ENCODE measurements at regions of chr6 and their contacts with region 1.

Region 1: DNA sequence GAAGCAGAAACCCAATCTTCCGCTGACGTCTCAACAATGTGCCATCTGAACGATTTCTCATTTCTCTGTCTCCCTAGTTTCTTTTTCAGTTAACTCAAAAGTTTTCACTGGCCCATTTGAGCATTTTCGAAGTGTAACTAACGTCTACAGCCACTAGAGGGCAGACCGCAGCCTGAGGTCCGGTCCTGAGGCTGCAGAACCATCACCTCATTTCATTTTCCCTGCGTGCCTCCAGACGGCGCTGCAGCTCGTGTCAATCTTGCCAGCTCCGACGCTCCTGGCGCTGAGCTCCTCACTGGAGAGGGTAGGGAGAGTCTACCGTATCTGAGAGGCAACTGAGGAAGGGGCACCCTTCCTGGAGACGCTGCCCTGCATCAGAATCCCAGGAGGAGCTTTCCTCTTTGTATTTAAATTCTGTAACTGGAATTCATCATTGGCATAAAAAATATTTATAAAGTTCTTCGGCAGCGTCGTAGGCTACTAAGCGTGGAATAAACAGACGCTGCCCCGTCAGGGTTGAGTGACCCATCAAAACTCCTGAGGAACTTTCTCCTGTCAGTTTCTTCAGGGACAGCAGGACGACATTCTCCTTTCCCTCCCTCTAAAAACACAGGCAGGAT is 28.5 kb upstream of the DTNBP1 start:
- DNase-seq: peak; percentile 55 to 92 (median 76)
- ATAC-seq: peak; percentile 100
- H3K4me3 ChIP-seq: no peak overlapping the region
- H3K4me3 Mint-ChIP-seq: no peak overlapping the region
- H3K27ac ChIP-seq: no peak overlapping the region
- H3K27ac Mint-ChIP-seq: no peak overlapping the region
- H3K4me1 ChIP-seq: no peaks in the 10 kb centered on the region
- H3K4me1 Mint-ChIP-seq: peaks cover 4% of the 10 kb centered on the region
- H3K27me3 ChIP-seq: no peaks in the 10 kb centered on the region
- H3K27me3 Mint-ChIP-seq: peaks cover 8% of the 10 kb centered on the region
- CTCF ChIP-seq: peak; percentile 100

Region 2: GRCh38 chr6:14770572-14770971 is 920.8 kb before region 1 on chr6:
- CTCF ChIA-PET with region 1: no interaction called
- POLR2A ChIA-PET with region 1: no interaction called
- intact Hi-C with region 1: no loop called
- DNase-seq: no peak
- ATAC-seq: no peak
- H3K4me3 ChIP-seq: no peak overlapping the region
- H3K4me3 Mint-ChIP-seq: no peak overlapping the region
- H3K27ac ChIP-seq: no peak overlapping the region
- H3K27ac Mint-ChIP-seq: no peak overlapping the region
- H3K4me1 ChIP-seq: no peaks in the 10 kb centered on the region
- H3K4me1 Mint-ChIP-seq: no peaks in the 10 kb centered on the region
- H3K27me3 ChIP-seq: no peaks in the 10 kb centered on the region
- H3K27me3 Mint-ChIP-seq: no peaks in the 10 kb centered on the region
- CTCF ChIP-seq: no peak

Region 3: DNA sequence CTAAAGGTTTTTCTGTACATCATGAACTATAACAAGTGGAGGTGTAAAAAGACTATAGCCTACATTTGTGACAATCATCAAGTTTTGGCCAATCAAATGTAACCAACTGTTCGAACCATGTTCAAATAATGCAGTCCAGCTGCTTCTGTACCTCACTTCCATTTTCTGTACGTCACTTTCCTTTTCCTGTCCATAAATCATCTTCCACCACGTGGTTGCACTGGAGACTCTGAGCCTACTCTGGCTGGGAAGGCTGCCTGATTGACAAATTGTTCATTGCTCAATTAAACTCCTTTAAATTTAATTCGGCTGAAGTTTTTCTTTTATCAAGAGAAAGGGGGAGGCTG is 715.9 kb before region 1 on chr6:
- CTCF ChIA-PET with region 1: no interaction called
- POLR2A ChIA-PET with region 1: no interaction called
- intact Hi-C with region 1: no loop called
- DNase-seq: peak in 1 of 9 experiments; percentile 7
- ATAC-seq: no peak
- H3K4me3 ChIP-seq: no peak overlapping the region
- H3K4me3 Mint-ChIP-seq: no peak overlapping the region
- H3K27ac ChIP-seq: no peak overlapping the region
- H3K27ac Mint-ChIP-seq: no peak overlapping the region
- H3K4me1 ChIP-seq: no peaks in the 10 kb centered on the region
- H3K4me1 Mint-ChIP-seq: no peaks in the 10 kb centered on the region
- H3K27me3 ChIP-seq: no peaks in the 10 kb centered on the region
- H3K27me3 Mint-ChIP-seq: peaks cover 3% of the 10 kb centered on the region
- CTCF ChIP-seq: no peak

Region 4: DNA sequence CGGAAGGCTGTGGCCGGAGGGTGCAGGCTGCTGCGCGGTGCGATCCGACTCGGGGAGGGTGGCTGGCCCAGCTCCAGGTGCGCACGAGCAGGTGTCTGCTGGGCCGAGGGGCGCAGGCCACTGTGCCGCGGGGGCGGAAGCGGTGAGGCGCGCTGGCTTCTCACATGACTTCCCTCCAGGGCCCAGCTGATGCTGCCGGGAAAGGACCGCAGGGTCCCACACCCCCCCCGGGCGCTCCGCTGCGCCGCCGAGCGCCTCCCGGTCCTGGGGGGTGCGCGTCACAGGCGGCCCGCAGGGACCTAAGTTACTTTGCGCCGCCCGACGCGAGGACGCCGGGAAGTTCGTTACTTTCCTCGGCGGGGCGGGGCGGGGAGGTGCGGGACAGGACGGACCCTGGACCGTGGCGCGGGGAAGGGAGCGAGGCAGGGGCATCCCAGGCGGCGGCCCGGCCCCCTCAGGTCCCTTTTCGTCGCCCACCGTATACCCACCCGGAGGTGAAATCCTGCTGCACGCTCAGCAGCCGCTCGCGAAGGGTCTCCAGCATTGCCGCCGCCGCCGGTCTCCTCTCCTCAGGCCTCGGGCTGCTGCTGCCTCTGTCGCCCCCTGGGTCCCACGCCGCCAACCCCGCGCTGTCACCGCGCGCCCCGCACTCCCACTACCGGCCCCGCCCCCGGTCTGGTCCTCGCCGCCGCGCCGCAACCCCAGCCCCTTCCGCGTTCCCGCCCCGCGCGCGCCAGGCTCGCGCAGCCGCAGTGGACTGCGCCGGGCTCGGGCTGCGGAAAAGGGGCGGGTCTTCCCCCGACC is 28.8 kb before region 1 on chr6 and contains the start of gene DTNBP1:
- CTCF ChIA-PET with region 1: interaction called, 4 read pairs
- POLR2A ChIA-PET with region 1: no interaction called
- intact Hi-C with region 1: loop called in 1 of 2 experiments (anchors 2 kb)
- DNase-seq: peak; percentile 58 to 90 (median 82)
- ATAC-seq: peak; percentile 73
- H3K4me3 ChIP-seq: peak within 1 kb of the TSS; percentile 67 to 76
- H3K4me3 Mint-ChIP-seq: peak within 1 kb of the TSS; percentile 83
- H3K27ac ChIP-seq: peak within 1 kb of the TSS; percentile 55 to 73
- H3K27ac Mint-ChIP-seq: peak within 1 kb of the TSS; percentile 73
- H3K4me1 ChIP-seq: peaks cover 7% of the 10 kb centered on the region
- H3K4me1 Mint-ChIP-seq: peaks cover 41% of the 10 kb centered on the region
- H3K27me3 ChIP-seq: no peaks in the 10 kb centered on the region
- H3K27me3 Mint-ChIP-seq: peaks cover 2% of the 10 kb centered on the region
- CTCF ChIP-seq: no peak
- total RNA-seq, gene DTNBP1: 12.3 to 12.6 TPM

Region 5: DNA sequence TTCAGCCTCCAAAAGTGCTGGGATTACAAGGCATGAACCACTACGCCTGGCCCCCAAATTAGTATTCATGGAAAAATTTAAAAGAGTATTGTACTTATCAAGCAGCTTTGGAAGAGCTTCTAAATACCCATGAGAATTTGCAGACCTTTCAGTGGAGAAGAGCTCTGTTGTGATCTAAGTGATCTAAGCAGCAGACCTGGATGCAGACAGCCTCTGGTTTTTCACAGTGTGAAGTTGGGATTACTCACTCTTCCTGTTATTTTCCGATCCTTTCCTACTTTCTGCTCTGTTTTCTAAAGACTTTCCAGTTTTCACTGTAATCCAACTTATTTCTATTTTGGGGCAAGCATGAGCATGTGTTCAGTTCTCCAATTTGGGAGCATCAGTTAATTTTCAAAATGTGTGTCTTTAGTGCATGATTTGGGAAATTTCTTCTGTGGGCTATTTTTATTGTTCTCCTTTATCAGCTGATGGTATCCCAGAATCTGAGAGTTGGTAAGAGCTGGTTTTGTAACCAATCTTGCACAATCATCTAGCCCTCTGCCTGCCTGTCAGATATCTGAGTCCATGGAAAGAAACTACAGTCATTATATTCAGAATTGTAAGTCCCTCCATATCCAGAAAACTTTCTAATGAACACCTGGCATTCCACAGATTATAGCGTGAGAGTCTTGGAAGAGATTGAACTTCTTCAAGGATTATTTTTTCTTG is 179.1 kb after region 1 on chr6:
- CTCF ChIA-PET with region 1: no interaction called
- POLR2A ChIA-PET with region 1: no interaction called
- intact Hi-C with region 1: no loop called
- DNase-seq: no peak
- ATAC-seq: no peak
- H3K4me3 ChIP-seq: no peak overlapping the region
- H3K4me3 Mint-ChIP-seq: no peak overlapping the region
- H3K27ac ChIP-seq: no peak overlapping the region
- H3K27ac Mint-ChIP-seq: no peak overlapping the region
- H3K4me1 ChIP-seq: no peaks in the 10 kb centered on the region
- H3K4me1 Mint-ChIP-seq: no peaks in the 10 kb centered on the region
- H3K27me3 ChIP-seq: no peaks in the 10 kb centered on the region
- H3K27me3 Mint-ChIP-seq: peaks cover 12% of the 10 kb centered on the region
- CTCF ChIP-seq: no peak

Region 6: DNA sequence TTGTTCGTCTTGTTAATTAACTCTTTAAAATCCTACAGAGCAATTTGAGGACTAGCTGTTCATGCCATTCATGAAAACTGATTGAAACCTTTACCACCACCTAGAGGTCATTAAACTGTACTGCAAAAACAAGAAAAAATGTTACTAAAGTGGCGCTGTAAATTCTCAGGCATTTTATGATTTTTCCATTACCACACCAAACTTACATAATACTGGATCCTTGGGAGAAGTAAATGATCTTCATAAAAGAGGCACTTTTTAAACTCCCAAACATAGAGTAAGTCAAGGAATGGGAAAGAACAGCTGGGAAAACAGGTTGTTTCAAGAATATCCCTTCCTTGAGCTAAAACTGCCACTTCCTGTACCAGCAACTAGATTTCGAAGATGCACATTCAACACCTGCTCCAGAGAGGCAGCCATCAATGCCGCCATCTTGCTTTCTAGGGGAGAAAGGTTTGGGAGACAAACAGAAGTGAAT is 491.9 kb after region 1 on chr6:
- CTCF ChIA-PET with region 1: interaction called, 80 read pairs
- POLR2A ChIA-PET with region 1: no interaction called
- intact Hi-C with region 1: loop called (anchors 1 kb)
- DNase-seq: peak in 2 of 9 experiments; percentile 44 to 62
- ATAC-seq: peak; percentile 36
- H3K4me3 ChIP-seq: no peak overlapping the region
- H3K4me3 Mint-ChIP-seq: no peak overlapping the region
- H3K27ac ChIP-seq: no peak overlapping the region
- H3K27ac Mint-ChIP-seq: no peak overlapping the region
- H3K4me1 ChIP-seq: peaks cover 17% of the 10 kb centered on the region
- H3K4me1 Mint-ChIP-seq: peaks cover 35% of the 10 kb centered on the region
- H3K27me3 ChIP-seq: no peaks in the 10 kb centered on the region
- H3K27me3 Mint-ChIP-seq: no peaks in the 10 kb centered on the region
- CTCF ChIP-seq: peak; percentile 89

Region 7: GRCh38 chr6:16216501-16217155 is 525.3 kb after region 1 on chr6:
- CTCF ChIA-PET with region 1: interaction called, 154 read pairs
- POLR2A ChIA-PET with region 1: no interaction called
- intact Hi-C with region 1: no loop called
- DNase-seq: peak in 1 of 9 experiments; percentile 17
- ATAC-seq: no peak
- H3K4me3 ChIP-seq: no peak overlapping the region
- H3K4me3 Mint-ChIP-seq: no peak overlapping the region
- H3K27ac ChIP-seq: no peak overlapping the region
- H3K27ac Mint-ChIP-seq: no peak overlapping the region
- H3K4me1 ChIP-seq: no peaks in the 10 kb centered on the region
- H3K4me1 Mint-ChIP-seq: no peaks in the 10 kb centered on the region
- H3K27me3 ChIP-seq: peaks cover 0 to 6% of the 10 kb centered on the region in 2 experiments
- H3K27me3 Mint-ChIP-seq: peaks cover 40% of the 10 kb centered on the region
- CTCF ChIP-seq: no peak

Region 8: DNA sequence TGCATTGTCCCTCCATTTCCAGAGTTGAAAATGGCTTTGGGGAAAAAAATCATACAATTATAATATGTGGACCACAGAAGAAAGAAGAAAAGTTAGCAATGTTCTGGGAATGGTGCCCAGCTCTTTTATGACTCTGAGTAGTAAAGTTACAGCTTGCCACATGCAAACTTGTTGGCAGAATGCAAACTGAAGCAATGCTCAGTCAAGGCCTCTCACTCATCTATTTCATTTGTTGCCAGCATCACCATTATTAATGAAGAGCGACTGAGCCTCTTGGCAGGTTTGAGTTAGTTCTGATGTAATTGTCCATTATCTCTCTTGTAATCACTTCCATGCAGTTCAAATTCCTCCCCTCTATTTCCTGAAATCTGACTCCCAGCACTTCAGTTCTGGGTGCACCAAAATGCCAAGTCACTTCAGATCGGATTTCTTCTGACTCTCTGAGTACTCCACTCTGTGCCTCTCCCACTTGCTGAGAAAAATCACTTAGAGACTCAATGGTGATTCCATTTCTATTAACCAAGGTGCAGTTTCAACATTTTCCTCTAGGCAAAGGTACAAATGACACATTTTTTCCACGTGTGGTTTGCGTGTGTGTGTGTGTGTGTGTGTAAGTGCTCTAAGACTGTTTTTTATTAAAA is 1256.1 kb after region 1 on chr6:
- CTCF ChIA-PET with region 1: no interaction called
- POLR2A ChIA-PET with region 1: no interaction called
- intact Hi-C with region 1: no loop called
- DNase-seq: peak in 1 of 9 experiments; percentile 7
- ATAC-seq: no peak
- H3K4me3 ChIP-seq: no peak overlapping the region
- H3K4me3 Mint-ChIP-seq: no peak overlapping the region
- H3K27ac ChIP-seq: no peak overlapping the region
- H3K27ac Mint-ChIP-seq: no peak overlapping the region
- H3K4me1 ChIP-seq: no peaks in the 10 kb centered on the region
- H3K4me1 Mint-ChIP-seq: peaks cover 4% of the 10 kb centered on the region
- H3K27me3 ChIP-seq: no peaks in the 10 kb centered on the region
- H3K27me3 Mint-ChIP-seq: peaks cover 18% of the 10 kb centered on the region
- CTCF ChIP-seq: no peak